GM12878 (cell line): ENCODE measurements at regions of chr19 and their contacts with region 1.

Region 1: DNA sequence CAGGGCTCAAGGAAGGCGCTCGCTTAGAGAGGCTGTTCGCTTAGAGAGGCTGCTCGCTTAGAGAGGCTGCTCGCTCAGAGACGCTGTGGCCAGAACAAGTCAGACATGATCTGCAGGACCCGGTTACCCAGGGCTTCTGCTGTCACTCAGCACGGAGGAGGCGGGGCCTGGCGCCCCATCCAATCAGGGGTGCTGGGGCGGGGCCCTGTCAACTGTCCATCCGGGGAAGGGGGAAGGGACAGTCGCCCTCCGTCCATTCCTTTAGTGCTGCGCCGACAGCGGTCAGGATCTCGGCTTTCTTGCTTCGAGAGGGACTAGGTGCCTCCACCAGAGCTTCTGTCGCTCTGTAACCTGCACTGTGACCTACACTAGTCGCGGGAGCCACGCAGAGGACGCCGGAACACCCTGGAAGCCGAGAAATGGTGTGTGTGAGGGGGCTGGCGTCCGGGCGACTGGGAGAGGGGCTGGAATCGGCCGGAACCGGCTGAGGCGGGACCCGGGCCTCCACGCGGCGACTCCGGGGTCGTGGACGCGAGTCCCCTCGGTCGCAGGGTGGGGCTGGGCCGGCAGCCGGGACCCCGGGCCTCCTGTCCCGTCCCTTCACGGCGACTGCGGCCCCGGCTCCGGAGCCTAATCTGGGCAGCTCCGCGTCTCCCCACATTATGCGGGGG is at the start of gene ZNF440:
- DNase-seq: peak; percentile 72
- ATAC-seq: peak; percentile 100
- H3K4me3 ChIP-seq: peak within 1 kb of the TSS; percentile 81
- H3K27ac ChIP-seq: peak within 1 kb of the TSS; percentile 84
- H3K4me1 ChIP-seq: peaks cover 7% of the 10 kb centered on the region
- H3K27me3 ChIP-seq: no peaks in the 10 kb centered on the region
- CTCF ChIP-seq: no peak
- EP300 ChIP-seq: no peak
- POLR2A ChIP-seq: peak; percentile 96
- RAD21 ChIP-seq: no peak
- polyA plus RNA-seq, gene ZNF440: 1.3 to 2.1 TPM

Region 2: DNA sequence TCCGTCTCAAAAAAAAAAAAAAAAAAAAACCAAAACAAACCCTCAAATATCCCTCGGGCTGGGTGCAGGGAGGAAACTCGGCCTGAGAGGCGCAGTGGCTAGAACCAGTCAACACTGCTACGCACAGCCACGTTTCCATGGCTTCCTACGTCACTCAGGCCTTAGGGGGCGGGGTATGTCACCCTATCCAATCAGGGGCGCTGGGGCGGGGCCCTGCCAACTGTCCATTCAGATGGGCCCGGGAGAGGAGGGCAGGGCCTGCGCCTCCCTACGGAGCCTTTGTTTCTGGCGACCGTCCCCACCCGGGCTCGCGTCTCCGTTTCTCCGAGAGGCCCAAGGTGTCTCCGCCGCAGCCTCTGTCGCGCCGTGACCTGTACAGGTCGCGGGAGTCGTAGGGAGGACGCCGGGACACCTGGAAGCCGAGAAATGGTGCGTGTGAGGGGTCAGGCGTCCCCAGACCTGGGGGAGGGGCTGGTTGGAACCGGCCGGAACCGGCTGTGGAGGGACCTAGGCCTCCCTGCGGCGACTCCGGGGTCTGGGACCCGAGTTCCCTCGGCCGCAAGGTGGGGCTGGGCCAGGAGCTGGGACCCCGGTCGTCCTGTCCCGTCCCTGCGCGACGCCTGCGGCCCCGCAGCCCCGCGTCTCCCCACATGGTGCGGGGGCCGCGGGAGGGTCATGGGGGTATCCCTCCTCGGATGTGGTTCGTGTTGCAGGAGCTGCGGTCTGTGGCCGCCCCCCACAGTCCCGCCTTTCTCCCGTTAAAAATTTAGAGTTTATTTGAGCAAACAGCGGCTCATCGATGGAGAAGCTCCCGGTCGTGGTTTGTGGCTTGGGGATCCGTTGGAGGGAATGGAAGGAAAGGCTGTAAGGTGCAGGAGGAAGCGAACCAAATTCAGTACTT is 216.7 kb before region 1 on chr19 and contains the start of gene ZNF627:
- CTCF ChIA-PET with region 1: no interaction called
- POLR2A ChIA-PET with region 1: no interaction called
- RAD21 ChIA-PET with region 1: no interaction called
- SMC1A ChIA-PET with region 1: no interaction called
- in situ Hi-C with region 1: no loop called
- intact Hi-C with region 1: loop called (anchors 5 kb)
- DNase-seq: peak; percentile 94
- ATAC-seq: peak; percentile 99
- H3K4me3 ChIP-seq: peak within 1 kb of the TSS; percentile 83
- H3K27ac ChIP-seq: peak within 1 kb of the TSS; percentile 99
- H3K4me1 ChIP-seq: peaks cover 14% of the 10 kb centered on the region
- H3K27me3 ChIP-seq: no peaks in the 10 kb centered on the region
- CTCF ChIP-seq: peak; percentile 10 to 30 (median 17); a peak in 3 of 6 replicates
- EP300 ChIP-seq: 0 out of 4 replicates have a peak, but pooled peaks of 1 of the 2 experiments have one; percentile 15
- POLR2A ChIP-seq: peak; percentile 99
- RAD21 ChIP-seq: no peak
- polyA plus RNA-seq, gene ZNF627: 5.1 to 5.4 TPM

Region 3: DNA sequence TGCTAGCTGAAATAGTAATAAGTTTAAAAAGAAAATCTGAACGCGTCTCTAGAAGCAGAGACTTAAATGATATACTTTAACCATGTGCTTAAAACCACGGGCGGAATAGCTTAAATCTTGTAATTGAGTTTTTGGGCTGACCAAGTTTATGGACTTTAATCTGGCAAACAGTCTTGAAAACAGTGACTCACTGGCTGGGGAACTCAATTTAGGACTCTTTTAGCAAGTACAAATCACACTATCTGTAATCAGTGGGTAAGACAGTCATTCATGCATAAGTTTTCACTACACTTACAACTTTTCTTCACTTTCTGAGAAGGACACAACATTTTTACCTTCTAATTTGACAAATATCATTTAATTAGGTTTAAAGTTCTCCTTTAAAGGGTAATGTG is 190.1 kb before region 1 on chr19:
- CTCF ChIA-PET with region 1: no interaction called
- POLR2A ChIA-PET with region 1: no interaction called
- RAD21 ChIA-PET with region 1: no interaction called
- SMC1A ChIA-PET with region 1: no interaction called
- in situ Hi-C with region 1: no loop called
- intact Hi-C with region 1: no loop called
- DNase-seq: no peak
- ATAC-seq: no peak
- H3K4me3 ChIP-seq: no peak overlapping the region
- H3K27ac ChIP-seq: no peak overlapping the region
- H3K4me1 ChIP-seq: no peaks in the 10 kb centered on the region
- H3K27me3 ChIP-seq: no peaks in the 10 kb centered on the region; a peak in 1 of 4 replicates
- CTCF ChIP-seq: no peak
- EP300 ChIP-seq: no peak
- POLR2A ChIP-seq: no peak
- RAD21 ChIP-seq: no peak

Region 4: DNA sequence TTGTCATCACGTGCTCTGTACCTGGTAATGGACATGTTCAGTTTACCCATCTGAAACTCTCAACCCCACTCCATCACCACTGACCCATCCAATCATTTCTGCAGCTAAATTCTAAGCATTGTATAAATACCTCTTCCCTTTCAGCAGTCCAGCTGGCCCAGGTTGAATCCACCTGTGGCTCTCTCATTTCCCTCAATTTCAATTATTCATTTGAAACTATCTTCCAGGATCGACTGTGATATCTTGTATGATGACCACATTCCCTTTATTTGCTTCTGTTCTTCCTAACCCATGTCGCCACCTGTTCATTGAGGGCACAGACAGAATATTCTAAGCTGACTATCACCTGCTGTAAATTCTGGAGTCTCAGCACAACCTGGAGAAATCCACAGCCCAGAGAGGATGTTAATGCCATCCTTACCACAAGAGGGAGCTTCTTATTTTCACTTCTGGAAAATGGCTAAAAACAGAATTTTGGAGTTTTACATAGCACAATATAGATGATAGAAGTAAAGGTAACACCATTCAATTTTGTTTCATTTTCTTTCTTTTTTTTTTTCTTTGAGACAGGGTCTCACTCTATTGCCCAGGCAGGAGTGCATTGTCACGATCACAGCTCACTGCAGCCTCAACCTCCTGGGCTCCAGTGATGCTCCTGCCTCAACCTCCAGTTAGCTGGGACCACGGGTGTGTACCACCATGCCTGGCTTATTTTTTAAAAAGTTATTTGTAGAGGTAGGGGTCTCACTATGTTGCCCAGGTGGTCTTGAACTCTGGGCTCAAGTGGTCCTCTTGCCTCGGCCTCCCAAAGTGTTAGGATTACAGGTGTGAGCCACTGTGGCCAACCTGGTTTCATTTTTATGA is 114.0 kb before region 1 on chr19:
- CTCF ChIA-PET with region 1: interaction called, 18 read pairs
- POLR2A ChIA-PET with region 1: no interaction called
- RAD21 ChIA-PET with region 1: interaction called, 3 read pairs
- SMC1A ChIA-PET with region 1: no interaction called
- in situ Hi-C with region 1: no loop called
- intact Hi-C with region 1: no loop called
- DNase-seq: no peak
- ATAC-seq: 0 out of 3 replicates have a peak, but pooled peaks have one; percentile 19
- H3K4me3 ChIP-seq: no peak overlapping the region
- H3K27ac ChIP-seq: no peak overlapping the region
- H3K4me1 ChIP-seq: no peaks in the 10 kb centered on the region
- H3K27me3 ChIP-seq: no peaks in the 10 kb centered on the region
- CTCF ChIP-seq: peak; percentile 44 to 51 (median 50); a peak in 5 of 6 replicates
- EP300 ChIP-seq: no peak
- POLR2A ChIP-seq: no peak
- RAD21 ChIP-seq: peak; percentile 38; the same call in 1 of the 2 replicates

Region 5: GRCh38 chr19:11747277-11747676 is 66.9 kb before region 1 on chr19:
- CTCF ChIA-PET with region 1: no interaction called
- POLR2A ChIA-PET with region 1: no interaction called
- RAD21 ChIA-PET with region 1: no interaction called
- SMC1A ChIA-PET with region 1: no interaction called
- in situ Hi-C with region 1: no loop called
- intact Hi-C with region 1: no loop called
- DNase-seq: no peak
- ATAC-seq: no peak
- H3K4me3 ChIP-seq: no peak overlapping the region
- H3K27ac ChIP-seq: no peak overlapping the region
- H3K4me1 ChIP-seq: no peaks in the 10 kb centered on the region
- H3K27me3 ChIP-seq: no peaks in the 10 kb centered on the region
- CTCF ChIP-seq: no peak
- EP300 ChIP-seq: no peak
- POLR2A ChIP-seq: no peak
- RAD21 ChIP-seq: no peak

Region 6: DNA sequence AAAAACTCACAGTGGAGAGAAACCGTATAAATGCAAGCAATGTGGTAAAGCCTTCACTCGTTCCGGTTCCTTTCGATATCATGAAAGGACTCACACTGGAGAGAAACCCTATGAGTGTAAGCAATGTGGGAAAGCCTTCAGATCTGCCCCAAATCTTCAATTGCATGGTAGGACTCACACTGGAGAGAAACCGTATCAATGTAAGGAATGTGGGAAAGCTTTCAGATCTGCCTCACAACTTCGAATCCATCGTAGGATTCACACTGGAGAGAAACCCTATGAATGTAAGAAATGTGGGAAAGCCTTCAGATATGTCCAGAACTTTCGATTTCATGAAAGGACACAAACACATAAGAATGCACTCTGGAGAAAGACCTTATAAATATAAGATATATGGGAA is 54.0 kb after region 1 on chr19:
- CTCF ChIA-PET with region 1: no interaction called
- POLR2A ChIA-PET with region 1: no interaction called
- RAD21 ChIA-PET with region 1: no interaction called
- SMC1A ChIA-PET with region 1: no interaction called
- in situ Hi-C with region 1: no loop called
- intact Hi-C with region 1: no loop called
- DNase-seq: no peak
- ATAC-seq: no peak
- H3K4me3 ChIP-seq: no peak overlapping the region
- H3K27ac ChIP-seq: no peak overlapping the region
- H3K4me1 ChIP-seq: no peaks in the 10 kb centered on the region
- H3K27me3 ChIP-seq: no peaks in the 10 kb centered on the region
- CTCF ChIP-seq: no peak
- EP300 ChIP-seq: no peak
- POLR2A ChIP-seq: no peak
- RAD21 ChIP-seq: no peak